Breast epithelium (tissue), 4 donors: ENCODE measurements at regions of chr1 and their contacts with region 1.

Region 1: GRCh38 chr1:97610748-97611147 is 310.1 kb downstream of the DPYD start:
- DNase-seq: no peak
- H3K4me3 ChIP-seq: no peak overlapping the region
- H3K27ac ChIP-seq: no peak overlapping the region
- H3K4me1 ChIP-seq: no peaks in the 10 kb centered on the region
- H3K27me3 ChIP-seq: no peaks in the 10 kb centered on the region
- CTCF ChIP-seq: no peak
- POLR2A ChIP-seq: no peak

Region 2: DNA sequence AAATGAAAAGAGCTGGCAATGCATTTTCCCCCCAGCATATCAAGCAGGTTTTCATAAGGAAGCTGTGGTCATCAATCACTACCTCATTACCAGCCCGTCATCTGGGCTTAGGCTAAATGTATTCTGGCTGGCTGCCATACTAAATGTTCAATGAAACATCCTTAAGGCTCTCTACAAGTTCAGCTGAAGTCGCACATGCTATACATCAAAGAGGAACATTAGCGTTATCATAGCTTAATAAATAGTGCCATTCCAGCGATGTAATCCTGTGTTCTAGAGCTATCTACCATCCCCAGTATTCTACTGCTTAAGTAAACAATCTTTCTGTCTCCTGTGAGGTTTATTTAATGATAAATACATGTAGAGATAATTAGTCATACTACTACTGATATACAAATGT is 21.3 kb after region 1 on chr1:
- intact Hi-C with region 1: no loop called
- DNase-seq: no peak
- H3K4me3 ChIP-seq: no peak overlapping the region
- H3K27ac ChIP-seq: no peak overlapping the region
- H3K4me1 ChIP-seq: no peaks in the 10 kb centered on the region
- H3K27me3 ChIP-seq: no peaks in the 10 kb centered on the region
- CTCF ChIP-seq: no peak
- POLR2A ChIP-seq: no peak

Region 3: DNA sequence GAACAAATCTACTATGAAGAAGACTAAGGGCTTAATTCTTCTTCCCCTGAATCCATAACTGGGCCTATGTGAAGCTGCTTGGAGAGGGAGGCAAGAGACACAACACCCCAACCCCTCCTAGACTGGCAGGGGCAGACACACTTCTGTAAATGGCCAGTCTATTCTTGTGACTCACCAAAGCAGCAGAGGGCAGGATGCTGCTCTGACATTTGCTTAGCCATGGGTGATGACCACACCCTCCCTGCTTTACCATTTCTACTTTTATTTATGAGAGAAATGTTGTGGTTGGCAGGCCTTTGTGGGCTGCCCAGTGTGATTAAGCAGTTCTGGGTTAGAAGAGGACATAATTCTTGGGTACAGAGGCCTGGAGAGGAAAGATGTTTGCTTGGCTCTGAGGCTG is 499.9 kb after region 1 on chr1:
- intact Hi-C with region 1: loop called (anchors 5 kb)
- DNase-seq: no peak
- H3K4me3 ChIP-seq: no peak overlapping the region
- H3K27ac ChIP-seq: no peak overlapping the region
- H3K4me1 ChIP-seq: no peaks in the 10 kb centered on the region
- H3K27me3 ChIP-seq: no peaks in the 10 kb centered on the region
- CTCF ChIP-seq: no peak
- POLR2A ChIP-seq: no peak